ENCODE measurements at regions of chr17 and their contacts with region 1.

Region 1: DNA sequence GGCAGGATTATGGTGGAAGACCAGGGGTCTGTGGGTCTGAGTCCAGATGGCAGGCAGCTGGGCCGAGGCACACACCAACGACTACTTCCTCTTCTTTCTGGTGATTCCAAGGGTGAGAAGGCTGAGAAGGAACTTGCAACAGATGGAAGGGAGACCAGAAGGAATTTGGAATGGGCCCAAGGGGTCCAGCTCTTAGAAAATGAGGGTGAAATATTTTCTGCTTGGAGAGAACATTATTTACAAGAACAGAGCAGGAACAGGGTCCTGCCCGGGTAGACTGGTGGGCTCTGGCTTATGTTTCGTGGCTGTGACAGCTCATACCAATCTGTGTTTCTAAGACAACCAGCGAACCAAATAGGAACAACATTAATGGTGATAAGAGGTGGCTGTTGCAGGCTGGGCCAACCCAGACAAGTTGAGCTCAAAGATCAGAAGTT is 36.6 kb downstream of the CCDC42 start:
- DNase-seq: no peak
- ATAC-seq: no peak
- H3K4me3 ChIP-seq: no peak overlapping the region
- H3K27ac ChIP-seq: no peak overlapping the region
- H3K4me1 ChIP-seq: no peaks in the 10 kb centered on the region
- H3K27me3 ChIP-seq: peaks cover 0 to 2% (median 0%) of the 10 kb centered on the region in 3 donors
- CTCF ChIP-seq: no peak
- POLR2A ChIP-seq: no peak

Region 2: GRCh38 chr17:8806926-8807550 is 99.0 kb after region 1 on chr17:
- in situ Hi-C with region 1: loop called in 1 of 4 experiments (anchors 25 kb)
- intact Hi-C with region 1: no loop called
- DNase-seq: no peak
- ATAC-seq: no peak
- H3K4me3 ChIP-seq: no peak overlapping the region
- H3K27ac ChIP-seq: no peak overlapping the region
- H3K4me1 ChIP-seq: no peaks in the 10 kb centered on the region
- H3K27me3 ChIP-seq: no peaks in the 10 kb centered on the region
- CTCF ChIP-seq: no peak
- POLR2A ChIP-seq: no peak

Measured in gastrocnemius medialis (tissue), 4 donors.